ENCODE measurements at regions of chr16 and their contacts with region 1.

Region 1: DNA sequence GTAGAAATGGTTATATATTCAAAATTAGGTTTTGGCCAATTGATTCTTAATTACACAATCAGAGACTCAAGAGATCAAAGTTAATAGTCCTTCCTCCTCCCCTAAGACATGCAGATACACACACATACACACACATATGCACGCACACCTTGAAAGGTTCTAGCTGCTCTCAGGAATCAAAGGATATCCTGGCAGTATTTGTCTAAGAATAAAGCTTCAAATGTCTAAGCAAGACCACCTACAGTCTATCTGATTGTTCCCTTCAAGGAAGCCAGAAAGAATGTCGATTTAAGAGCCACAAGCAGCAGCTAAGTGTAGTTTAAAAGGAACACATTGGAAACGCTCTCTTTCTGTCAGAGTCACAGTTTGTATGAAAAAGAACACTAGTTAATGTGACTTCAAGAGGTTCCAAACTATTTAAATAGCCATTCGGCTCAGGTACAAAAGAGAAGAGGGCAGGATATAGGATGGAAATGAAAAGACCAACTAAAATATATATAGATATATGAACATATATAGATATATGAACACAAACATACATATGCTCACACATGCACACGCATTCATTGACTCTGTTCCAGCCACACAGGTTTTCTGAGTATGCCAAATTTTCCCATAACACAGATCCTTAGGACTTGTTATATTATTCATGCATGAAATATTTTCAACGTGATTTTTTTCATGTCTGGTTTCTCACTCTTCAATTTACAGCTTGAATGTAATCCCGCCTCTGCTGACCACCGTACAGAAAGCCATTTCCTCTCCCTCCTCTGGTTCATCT is 79.0 kb downstream of the CDH8 start:
- DNase-seq: no peak
- ATAC-seq: no peak
- H3K4me3 ChIP-seq: no peak overlapping the region
- H3K27ac ChIP-seq: no peak overlapping the region
- H3K4me1 ChIP-seq: no peaks in the 10 kb centered on the region
- H3K27me3 ChIP-seq: no peaks in the 10 kb centered on the region
- CTCF ChIP-seq: no peak

Region 2: DNA sequence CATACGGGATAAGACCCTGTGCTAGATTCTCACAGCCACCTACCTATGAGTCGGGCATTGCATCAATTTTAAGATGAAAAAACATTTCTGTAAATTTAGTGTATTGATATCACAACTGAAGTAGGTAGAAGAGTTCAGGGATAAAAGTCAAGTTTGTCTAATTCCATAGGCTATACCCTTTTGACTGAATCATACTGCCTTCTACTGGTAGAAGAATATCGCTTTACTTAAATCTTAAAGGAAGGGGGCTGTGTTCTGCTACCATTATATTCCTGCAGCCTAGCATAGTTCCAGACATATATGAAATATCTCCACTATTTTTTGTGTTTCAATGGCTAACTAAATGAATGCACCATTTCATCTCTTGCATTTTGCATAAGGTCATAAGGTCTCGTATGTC is 1049.6 kb before region 1 on chr16:
- CTCF ChIA-PET with region 1: no interaction called
- POLR2A ChIA-PET with region 1: interaction called, 11 read pairs
- in situ Hi-C with region 1: no loop called
- intact Hi-C with region 1: no loop called
- DNase-seq: no peak
- ATAC-seq: no peak
- H3K4me3 ChIP-seq: no peak overlapping the region
- H3K27ac ChIP-seq: no peak overlapping the region
- H3K4me1 ChIP-seq: no peaks in the 10 kb centered on the region
- H3K27me3 ChIP-seq: no peaks in the 10 kb centered on the region
- CTCF ChIP-seq: no peak

Region 3: GRCh38 chr16:61195006-61195405 is 762.3 kb before region 1 on chr16:
- CTCF ChIA-PET with region 1: no interaction called
- POLR2A ChIA-PET with region 1: no interaction called
- in situ Hi-C with region 1: no loop called
- intact Hi-C with region 1: no loop called
- DNase-seq: no peak
- ATAC-seq: no peak
- H3K4me3 ChIP-seq: no peak overlapping the region
- H3K27ac ChIP-seq: no peak overlapping the region
- H3K4me1 ChIP-seq: no peaks in the 10 kb centered on the region
- H3K27me3 ChIP-seq: no peaks in the 10 kb centered on the region
- CTCF ChIP-seq: no peak